Motor neuron (in vitro differentiated cells): ENCODE measurements at regions of chr15 and their contacts with region 1.

Region 1: GRCh38 chr15:57306161-57306943 is 70.0 kb upstream of the CGNL1 start:
- ATAC-seq: peak; percentile 81 to 96 (median 90)
- H3K4me3 ChIP-seq: peak overlapping the region; percentile 17 to 38 (median 30)
- H3K27ac ChIP-seq: peak overlapping the region in 1 of 2 donors; percentile 44
- H3K4me1 ChIP-seq: peaks cover 0 to 5% of the 10 kb centered on the region in 2 donors

Region 2: DNA sequence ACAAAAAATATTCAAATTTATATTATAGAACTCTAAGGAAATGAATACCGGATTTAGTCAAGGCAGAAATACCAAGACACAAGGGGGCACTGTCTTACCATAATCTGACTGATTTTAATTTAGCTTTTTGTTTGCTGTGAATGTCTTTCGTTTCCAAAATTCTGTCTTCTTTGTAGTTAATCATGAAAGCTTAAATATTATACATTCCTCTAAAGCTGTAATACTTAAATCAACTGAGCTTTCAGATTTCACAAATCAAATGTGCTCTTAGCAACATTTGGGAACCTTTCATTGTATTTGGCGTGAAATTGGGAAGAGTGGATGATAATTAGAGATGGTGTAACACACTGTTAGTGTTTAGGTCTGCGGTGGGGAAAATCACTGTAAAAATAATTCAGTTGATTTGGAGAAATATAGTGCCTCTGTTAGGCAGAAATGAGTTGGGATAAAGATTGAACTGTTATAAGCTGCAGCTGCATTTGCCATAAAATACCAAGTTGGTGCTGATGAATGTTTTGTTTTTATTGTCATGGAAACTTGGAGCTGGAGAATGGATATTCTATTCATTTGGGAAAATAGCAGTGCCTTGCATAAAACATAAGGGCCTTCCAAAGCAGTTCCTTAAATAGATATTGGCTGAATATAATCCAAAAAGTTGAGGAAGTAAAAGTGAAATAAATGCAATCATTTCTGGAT is 159.7 kb before region 1 on chr15:
- in situ Hi-C with region 1: loop called in 1 of 9 experiments (anchors 25 kb)
- ATAC-seq: peak in 4 of 8 experiments; percentile 24 to 89 (median 71)
- H3K4me3 ChIP-seq: no peak overlapping the region
- H3K27ac ChIP-seq: no peak overlapping the region
- H3K4me1 ChIP-seq: peaks cover 6% of the 10 kb centered on the region in 2 donors